ENCODE measurements at regions of chr4 and their contacts with region 1.

Region 1: DNA sequence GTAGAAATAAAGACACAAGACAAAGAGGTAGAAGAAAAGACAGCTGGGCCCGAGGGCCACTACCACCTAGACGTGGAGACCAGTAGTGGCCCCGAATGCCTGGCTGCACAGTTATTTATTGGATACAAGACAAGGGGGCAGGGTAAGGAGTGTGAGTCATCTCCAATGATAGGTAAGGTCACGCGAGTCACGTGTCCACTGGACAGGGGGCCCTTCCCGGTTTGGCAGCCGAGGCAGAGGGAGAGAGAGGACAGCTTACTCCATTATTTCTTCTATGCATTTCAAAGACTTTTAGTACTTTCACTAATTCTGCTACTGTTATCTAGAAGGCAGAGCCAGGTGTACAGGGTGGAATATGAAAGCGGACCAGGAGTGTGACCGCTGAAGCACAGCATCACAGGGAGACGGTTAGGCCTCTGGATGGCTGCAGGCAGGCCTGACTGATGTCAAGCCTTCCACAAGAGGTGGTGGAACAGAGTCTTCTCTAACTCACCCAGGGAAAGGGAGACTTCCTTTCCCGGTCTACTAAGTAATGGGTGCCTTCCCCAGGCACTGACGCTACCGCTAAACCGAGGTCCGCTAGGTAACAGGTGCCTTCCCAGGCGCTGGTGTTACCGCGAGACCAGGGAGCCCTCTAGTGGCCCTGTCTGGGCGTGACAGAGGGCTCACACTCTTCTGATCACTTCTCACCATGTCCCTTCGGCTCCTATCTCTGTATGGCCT is 44.9 kb downstream of the ZBTB49 start:
- DNase-seq: peak; percentile 74 to 82 (median 78)
- ATAC-seq: peak; percentile 72
- H3K4me3 ChIP-seq: no peak overlapping the region
- H3K27ac ChIP-seq: no peak overlapping the region
- H3K4me1 ChIP-seq: no peaks in the 10 kb centered on the region
- H3K27me3 ChIP-seq: no peaks in the 10 kb centered on the region
- CTCF ChIP-seq: peak; percentile 66 to 80 (median 76)
- POLR2A ChIP-seq: no peak

Region 2: DNA sequence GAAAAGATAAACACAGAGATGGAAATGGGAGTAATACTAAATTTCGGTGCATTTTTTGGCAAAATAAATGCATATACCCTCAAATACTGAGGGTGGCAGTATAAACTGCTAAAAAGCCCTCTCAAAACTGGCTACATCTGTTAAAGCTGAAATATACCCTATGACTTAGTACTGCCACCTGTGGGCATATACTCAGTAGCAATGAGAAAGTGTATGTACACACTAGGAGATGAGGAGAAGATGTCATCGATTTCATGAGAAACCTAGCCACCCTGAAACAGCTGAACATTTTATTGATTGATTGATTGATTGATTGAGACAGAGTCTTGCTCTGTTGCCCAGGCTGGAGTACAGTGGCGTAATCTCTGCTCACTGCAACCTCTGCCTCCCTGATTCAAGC is 74.7 kb before region 1 on chr4:
- intact Hi-C with region 1: loop called (anchors 5 kb)
- DNase-seq: peak in 1 of 4 donors; percentile 9
- ATAC-seq: no peak
- H3K4me3 ChIP-seq: no peak overlapping the region
- H3K27ac ChIP-seq: no peak overlapping the region
- H3K4me1 ChIP-seq: peaks cover 5% of the 10 kb centered on the region
- H3K27me3 ChIP-seq: no peaks in the 10 kb centered on the region
- CTCF ChIP-seq: peak in 4 of 7 experiments; percentile 15 to 44 (median 24)
- POLR2A ChIP-seq: no peak

Region 3: DNA sequence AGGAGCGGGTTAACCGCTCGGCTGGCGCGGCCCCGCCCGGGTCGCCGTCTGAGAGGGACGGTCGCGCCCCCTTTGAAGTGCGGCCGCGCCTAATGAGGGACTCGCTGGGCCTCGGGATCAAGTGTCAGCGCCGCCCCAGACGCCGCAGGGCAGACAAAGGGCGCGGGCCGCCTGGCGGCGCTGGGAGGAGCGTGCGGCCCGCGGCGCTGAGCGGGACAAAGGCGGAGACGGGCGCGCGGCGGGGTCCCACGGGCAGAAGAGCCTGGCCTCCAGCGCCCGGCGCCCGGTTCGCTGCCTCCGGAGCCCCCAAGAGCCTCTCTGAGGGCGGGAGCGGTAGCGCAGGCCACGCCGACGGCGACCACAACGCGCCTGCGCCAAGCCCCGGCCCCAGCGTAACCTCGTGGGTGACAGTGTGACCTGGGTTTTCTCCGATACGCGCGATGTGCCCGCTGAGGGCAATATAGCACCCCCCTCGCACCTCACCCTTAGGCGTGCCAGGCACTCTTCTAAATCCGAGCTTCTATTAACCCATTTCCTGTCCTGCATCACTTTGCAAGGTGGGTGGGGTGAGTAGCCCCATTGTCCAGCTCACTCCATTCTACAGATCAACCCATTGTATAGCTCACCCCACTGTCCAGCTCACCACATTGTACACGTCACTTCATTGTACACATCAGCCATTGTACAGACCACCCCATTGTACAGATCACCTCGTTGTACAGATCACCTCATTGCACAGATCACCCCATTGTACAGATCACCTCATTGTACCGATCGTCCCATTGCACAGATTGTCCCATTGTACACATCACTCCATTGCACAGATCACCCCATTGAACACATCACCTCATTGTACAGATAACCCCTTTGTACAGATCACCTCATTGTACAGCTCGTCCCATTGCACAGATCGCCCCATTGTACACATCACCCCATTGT is 240.6 kb after region 1 on chr4:
- intact Hi-C with region 1: no loop called
- DNase-seq: peak; percentile 51 to 73 (median 56)
- ATAC-seq: peak; percentile 82
- H3K4me3 ChIP-seq: peak overlapping the region; percentile 51 to 55
- H3K27ac ChIP-seq: peak overlapping the region in 3 of 4 donors; percentile 38 to 66 (median 57)
- H3K4me1 ChIP-seq: peaks cover 3% of the 10 kb centered on the region
- H3K27me3 ChIP-seq: no peaks in the 10 kb centered on the region
- CTCF ChIP-seq: peak; percentile 25 to 70 (median 40)
- POLR2A ChIP-seq: peak in 1 of 3 donors; percentile 13

Measured in body of pancreas (tissue), 4 donors.